MCF 10A (cell line): ENCODE measurements at regions of chrX and their contacts with region 1.

Region 1: GRCh38 chrX:101415180-101416145 is 7.4 kb downstream of the HNRNPH2 start:
- DNase-seq: peak; percentile 77
- H3K4me3 Mint-ChIP-seq: no peak overlapping the region
- H3K27ac Mint-ChIP-seq: no peak overlapping the region
- H3K4me1 Mint-ChIP-seq: peaks cover 3% of the 10 kb centered on the region
- H3K27me3 Mint-ChIP-seq: peaks cover 57% of the 10 kb centered on the region
- CTCF ChIP-seq: peak; percentile 50

Region 2: GRCh38 chrX:100447654-100448397 is 967.6 kb before region 1 on chrX:
- CTCF ChIA-PET with region 1: no interaction called
- POLR2A ChIA-PET with region 1: no interaction called
- intact Hi-C with region 1: no loop called
- DNase-seq: peak; percentile 54
- H3K4me3 Mint-ChIP-seq: peak overlapping the region; percentile 17
- H3K27ac Mint-ChIP-seq: no peak overlapping the region
- H3K4me1 Mint-ChIP-seq: peaks cover 6% of the 10 kb centered on the region
- H3K27me3 Mint-ChIP-seq: peaks cover 35% of the 10 kb centered on the region
- CTCF ChIP-seq: peak; percentile 58

Region 3: GRCh38 chrX:101427954-101428353 is 12.5 kb after region 1 on chrX:
- CTCF ChIA-PET with region 1: interaction called, 28 read pairs
- POLR2A ChIA-PET with region 1: interaction called, 5 read pairs
- intact Hi-C with region 1: no loop called
- DNase-seq: no peak
- H3K4me3 Mint-ChIP-seq: no peak overlapping the region
- H3K27ac Mint-ChIP-seq: no peak overlapping the region
- H3K4me1 Mint-ChIP-seq: no peaks in the 10 kb centered on the region
- H3K27me3 Mint-ChIP-seq: peaks cover 25% of the 10 kb centered on the region
- CTCF ChIP-seq: no peak

Region 4: DNA sequence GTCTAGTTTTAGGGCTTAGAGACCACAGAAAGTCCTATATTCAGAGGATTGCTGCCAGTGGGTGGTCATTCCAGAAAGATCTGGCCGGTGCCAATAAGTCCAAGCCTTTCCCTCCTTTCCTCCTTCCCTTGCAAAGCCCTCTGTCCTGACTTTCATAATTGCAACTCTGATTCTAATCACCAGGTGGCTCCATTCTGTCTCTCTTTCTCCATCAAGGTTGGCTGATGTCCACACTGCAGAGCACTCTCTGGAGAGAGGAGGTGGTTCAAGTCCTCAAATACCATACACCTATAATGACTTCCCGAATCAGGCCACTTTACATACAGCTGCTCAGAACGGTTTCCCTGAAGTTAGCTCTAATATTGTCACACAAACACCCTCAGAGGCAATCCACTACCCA is 47.4 kb after region 1 on chrX:
- CTCF ChIA-PET with region 1: interaction called, 10 read pairs
- POLR2A ChIA-PET with region 1: interaction called, 3 read pairs
- intact Hi-C with region 1: no loop called
- DNase-seq: peak; percentile 51
- H3K4me3 Mint-ChIP-seq: no peak overlapping the region
- H3K27ac Mint-ChIP-seq: no peak overlapping the region
- H3K4me1 Mint-ChIP-seq: no peaks in the 10 kb centered on the region
- H3K27me3 Mint-ChIP-seq: peaks cover 63% of the 10 kb centered on the region
- CTCF ChIP-seq: peak; percentile 35

Region 5: DNA sequence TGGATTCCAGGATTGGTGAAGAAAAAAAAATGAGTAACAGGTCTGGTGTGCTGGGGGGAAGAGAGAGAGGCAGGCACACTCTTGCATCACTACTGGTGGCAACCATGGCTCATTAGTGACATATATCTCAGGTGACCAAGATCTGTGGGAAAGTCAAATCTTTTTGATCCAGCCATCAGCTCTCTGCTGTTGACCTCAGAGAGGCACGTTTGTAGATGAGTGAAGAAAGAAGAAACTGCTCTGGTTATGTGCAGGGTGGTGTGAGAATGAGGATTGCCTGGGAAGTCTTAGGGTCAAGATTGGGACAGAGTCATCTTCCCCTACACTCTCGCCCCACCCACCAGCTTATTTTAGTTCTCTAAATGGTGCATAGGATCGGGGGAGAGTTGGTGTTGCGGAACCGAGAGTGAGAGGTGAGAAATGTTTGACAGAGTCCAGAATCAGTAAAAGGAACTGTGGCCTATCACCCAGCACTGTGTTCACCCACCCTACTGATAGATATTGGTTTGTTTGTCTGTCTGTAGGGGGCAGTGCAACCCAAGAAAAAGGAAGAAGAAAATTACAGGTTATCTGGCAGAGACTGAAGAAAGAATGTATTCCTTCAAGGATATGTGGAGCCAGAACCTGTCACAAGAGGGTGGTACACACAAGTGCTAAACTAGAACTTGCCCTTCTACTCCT is 180.4 kb after region 1 on chrX:
- CTCF ChIA-PET with region 1: interaction called, 3 read pairs
- POLR2A ChIA-PET with region 1: no interaction called
- intact Hi-C with region 1: loop called (anchors 5 kb)
- DNase-seq: peak; percentile 71
- H3K4me3 Mint-ChIP-seq: no peak overlapping the region
- H3K27ac Mint-ChIP-seq: no peak overlapping the region
- H3K4me1 Mint-ChIP-seq: no peaks in the 10 kb centered on the region
- H3K27me3 Mint-ChIP-seq: peaks cover 44% of the 10 kb centered on the region
- CTCF ChIP-seq: peak; percentile 65

Region 6: DNA sequence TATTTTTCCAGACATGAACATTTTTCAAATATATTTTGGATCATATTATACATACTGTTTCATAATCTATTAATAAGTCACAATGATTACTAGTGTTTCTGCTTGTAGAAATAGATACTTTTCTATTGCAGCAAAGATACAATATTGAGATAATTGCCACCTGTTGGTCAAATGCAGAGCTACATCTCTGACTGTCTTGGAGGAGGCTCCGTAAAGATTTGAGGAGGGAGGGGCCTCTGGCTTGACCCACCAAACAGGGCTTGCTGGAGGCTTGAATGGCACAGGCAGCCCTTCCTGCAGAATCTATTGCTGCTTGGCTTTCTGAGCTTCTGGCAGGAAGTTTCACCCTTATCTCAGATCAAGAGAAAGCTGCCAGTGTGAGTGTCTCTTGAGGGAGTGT is 343.5 kb after region 1 on chrX:
- CTCF ChIA-PET with region 1: interaction called, 11 read pairs
- POLR2A ChIA-PET with region 1: no interaction called
- intact Hi-C with region 1: loop called (anchors 2 kb)
- DNase-seq: peak; percentile 46
- H3K4me3 Mint-ChIP-seq: no peak overlapping the region
- H3K27ac Mint-ChIP-seq: no peak overlapping the region
- H3K4me1 Mint-ChIP-seq: no peaks in the 10 kb centered on the region
- H3K27me3 Mint-ChIP-seq: peaks cover 91% of the 10 kb centered on the region
- CTCF ChIP-seq: peak; percentile 42

Region 7: DNA sequence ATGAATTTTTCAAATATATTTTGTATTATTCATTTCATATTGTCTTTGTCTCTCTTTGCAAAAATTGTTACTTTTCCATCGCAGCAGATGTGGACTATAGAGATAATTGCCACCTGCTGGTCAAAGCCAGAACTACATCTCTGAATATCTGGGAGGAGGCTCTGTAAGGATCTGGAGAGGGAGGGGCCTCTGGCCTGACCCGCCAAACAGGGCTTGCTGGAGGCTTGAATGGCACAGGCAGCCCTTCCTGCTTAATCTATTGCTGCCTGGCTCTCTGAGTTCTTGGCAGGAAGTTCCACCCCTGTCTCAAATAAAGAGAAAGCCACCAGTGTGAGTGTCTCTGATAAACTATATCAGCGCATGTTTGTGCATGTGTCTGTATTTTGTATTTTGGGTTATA is 383.9 kb after region 1 on chrX:
- CTCF ChIA-PET with region 1: interaction called, 6 read pairs
- POLR2A ChIA-PET with region 1: no interaction called
- intact Hi-C with region 1: loop called (anchors 2 kb)
- DNase-seq: peak; percentile 91
- H3K4me3 Mint-ChIP-seq: no peak overlapping the region
- H3K27ac Mint-ChIP-seq: no peak overlapping the region
- H3K4me1 Mint-ChIP-seq: no peaks in the 10 kb centered on the region
- H3K27me3 Mint-ChIP-seq: peaks cover 27% of the 10 kb centered on the region
- CTCF ChIP-seq: peak; percentile 66

Region 8: DNA sequence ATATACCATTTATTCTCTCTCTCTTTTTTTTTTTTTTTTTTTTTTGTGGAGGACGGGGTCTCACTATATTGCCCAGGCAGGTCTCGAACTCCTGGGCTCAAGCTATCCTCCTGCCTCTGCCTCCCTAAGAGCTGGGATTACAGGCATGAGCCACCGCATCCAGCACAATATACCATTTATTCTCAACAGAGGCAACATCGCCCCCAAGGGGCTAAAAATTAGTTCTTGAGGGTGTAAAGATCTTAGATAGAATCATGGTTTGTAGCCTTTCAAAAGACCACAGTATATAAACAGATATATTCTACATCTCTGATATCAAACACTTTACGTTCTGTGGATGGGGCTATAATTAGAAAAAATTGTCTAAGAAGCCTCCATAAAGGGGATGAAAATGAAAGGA is 670.2 kb after region 1 on chrX:
- CTCF ChIA-PET with region 1: no interaction called
- POLR2A ChIA-PET with region 1: no interaction called
- intact Hi-C with region 1: loop called (anchors 5 kb)
- DNase-seq: peak; percentile 23
- H3K4me3 Mint-ChIP-seq: no peak overlapping the region
- H3K27ac Mint-ChIP-seq: no peak overlapping the region
- H3K4me1 Mint-ChIP-seq: no peaks in the 10 kb centered on the region
- H3K27me3 Mint-ChIP-seq: peaks cover 53% of the 10 kb centered on the region
- CTCF ChIP-seq: peak; percentile 4